Cardiac septum (tissue), 1 donor: ENCODE measurements at regions of chr6 and their contacts with region 1.

Region 1: GRCh38 chr6:42879372-42880239 is at the start of gene RPL7L1:
- DNase-seq: peak; percentile 93
- total RNA-seq, gene RPL7L1: 46.9 TPM

Region 2: GRCh38 chr6:42028234-42029061 is 851.2 kb before region 1 on chr6:
- intact Hi-C with region 1: no loop called
- DNase-seq: peak; percentile 84

Region 3: DNA sequence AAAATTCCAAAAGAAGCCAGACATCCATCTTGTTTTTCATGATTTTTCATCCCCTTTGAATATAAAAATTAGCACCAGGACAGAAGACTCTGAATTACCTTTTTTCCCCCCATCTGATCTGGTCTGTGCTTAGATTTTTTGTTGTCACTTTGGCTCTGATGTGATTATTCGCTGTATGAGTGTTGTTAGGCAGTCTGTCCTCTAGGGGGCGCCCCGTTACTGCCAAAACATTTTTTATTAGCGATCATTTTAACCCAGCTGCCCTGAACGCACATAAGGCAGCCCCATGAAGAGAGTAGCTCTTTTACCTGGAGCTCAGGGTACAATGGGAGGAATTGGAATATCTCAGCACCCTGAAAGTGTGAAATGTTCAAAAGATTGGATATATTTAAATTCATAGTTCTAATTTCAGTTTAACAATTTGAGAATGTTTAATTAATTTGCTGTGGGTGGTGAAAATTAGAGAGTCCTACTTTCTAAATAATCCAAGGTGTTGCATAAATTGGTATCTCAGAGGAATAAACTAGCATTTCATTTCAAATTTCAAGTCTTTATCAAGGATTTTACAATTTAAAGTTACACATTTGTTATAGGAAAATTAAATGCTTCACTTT is 218.0 kb before region 1 on chr6:
- intact Hi-C with region 1: loop called (anchors 2 kb)
- DNase-seq: peak; percentile 86

Region 4: DNA sequence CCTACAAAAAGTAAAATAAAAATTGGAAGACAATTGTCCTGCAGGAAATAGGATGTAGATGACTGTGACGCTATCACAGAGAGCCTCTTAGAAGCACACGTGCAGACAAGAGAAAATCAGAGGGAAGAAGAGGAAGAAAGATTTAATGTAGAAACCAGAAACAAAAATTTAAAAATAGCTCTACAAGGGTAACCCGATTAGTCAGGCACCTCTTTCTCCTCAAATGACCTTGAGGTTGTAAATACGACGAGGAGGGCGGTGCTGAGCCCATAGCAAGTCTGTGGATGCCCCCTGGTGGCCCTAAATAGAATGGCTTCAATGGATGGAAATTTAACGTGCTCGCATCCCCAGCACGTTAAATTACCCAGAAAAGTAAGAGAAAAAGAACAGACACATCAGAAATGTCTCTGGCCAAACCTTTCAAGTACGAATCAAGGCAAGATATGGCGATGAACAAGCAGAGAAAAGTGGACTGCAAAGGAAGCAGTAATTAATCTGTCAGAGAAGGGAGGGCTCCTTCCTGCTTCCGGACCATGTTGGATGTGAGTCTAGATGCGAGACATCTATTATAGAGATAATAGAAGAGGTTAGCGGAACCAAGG is 153.0 kb before region 1 on chr6:
- intact Hi-C with region 1: loop called (anchors 2 kb)
- DNase-seq: peak; percentile 85

Region 5: GRCh38 chr6:42745707-42746462 is 133.7 kb before region 1 on chr6 and contains the start of gene TBCC:
- intact Hi-C with region 1: loop called (anchors 2 kb)
- DNase-seq: peak; percentile 97
- total RNA-seq, gene TBCC: 11.0 TPM

Region 6: DNA sequence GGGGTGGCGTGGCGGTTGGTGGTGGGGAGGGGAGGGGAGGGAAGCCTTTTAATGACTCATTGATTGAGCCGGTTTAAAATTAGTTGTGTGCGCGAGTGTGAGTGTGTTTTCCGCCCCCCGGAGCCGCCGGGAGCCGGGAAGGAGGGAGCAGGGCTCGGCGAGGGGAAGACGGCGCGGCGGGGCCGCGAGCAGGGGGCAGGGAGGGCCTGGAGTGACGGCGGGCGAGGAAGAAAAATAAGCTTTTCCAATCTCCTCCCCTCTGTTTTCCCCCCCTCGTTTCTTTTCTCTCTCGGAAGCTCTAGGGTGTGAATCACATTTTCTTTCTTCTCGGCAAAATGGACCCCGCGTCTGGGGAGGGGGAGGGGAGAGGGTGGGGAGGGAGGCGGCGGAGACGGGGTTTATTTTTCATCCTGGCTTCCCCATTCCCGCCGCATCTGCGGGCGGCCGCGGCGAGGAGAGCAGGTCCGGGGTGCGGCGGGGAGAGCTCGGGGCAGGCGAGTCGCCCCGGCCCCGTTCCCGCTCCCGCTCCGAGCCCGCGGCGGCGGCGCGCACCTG is 96.9 kb before region 1 on chr6:
- intact Hi-C with region 1: loop called (anchors 5 kb)
- DNase-seq: peak; percentile 90

Region 7: GRCh38 chr6:42890311-42891198 is 10.9 kb after region 1 on chr6:
- intact Hi-C with region 1: loop called (anchors 1 kb)
- DNase-seq: peak; percentile 98

Region 8: DNA sequence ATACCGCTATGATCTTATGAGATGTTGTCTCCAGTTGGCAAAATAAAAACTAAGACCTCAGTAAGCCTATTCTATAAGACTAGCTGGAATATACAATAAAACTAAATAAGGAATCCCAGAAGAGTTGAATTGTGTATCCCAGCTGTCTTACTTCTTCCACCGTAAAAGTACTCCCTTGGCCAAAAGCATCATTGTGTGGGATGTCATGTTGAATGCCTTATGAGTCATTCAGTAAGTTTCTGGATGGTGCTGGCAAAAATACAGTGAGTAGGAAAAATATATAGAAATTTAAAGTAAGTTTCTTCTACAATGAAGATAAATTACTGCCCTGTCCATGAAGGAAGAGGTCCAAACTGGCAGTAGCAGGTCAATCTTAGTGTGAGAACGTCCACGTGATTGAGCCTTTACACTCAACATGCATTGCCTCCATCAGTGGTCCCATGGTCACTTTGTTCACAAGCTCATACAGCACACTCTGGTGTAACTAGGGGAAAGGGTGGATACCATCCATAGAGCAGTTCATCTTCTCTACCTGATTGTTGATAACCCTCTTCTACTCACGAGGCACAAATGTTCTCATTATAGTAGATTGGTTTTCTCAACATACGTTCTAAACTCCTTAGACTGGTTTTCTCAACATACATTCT is 503.5 kb after region 1 on chr6:
- intact Hi-C with region 1: no loop called
- DNase-seq: no peak

Region 9: GRCh38 chr6:43465948-43466347 is 586.3 kb after region 1 on chr6:
- intact Hi-C with region 1: no loop called
- DNase-seq: no peak